Posterior vena cava (tissue), 2 donors: ENCODE measurements at regions of chr4 and their contacts with region 1.

Region 1: DNA sequence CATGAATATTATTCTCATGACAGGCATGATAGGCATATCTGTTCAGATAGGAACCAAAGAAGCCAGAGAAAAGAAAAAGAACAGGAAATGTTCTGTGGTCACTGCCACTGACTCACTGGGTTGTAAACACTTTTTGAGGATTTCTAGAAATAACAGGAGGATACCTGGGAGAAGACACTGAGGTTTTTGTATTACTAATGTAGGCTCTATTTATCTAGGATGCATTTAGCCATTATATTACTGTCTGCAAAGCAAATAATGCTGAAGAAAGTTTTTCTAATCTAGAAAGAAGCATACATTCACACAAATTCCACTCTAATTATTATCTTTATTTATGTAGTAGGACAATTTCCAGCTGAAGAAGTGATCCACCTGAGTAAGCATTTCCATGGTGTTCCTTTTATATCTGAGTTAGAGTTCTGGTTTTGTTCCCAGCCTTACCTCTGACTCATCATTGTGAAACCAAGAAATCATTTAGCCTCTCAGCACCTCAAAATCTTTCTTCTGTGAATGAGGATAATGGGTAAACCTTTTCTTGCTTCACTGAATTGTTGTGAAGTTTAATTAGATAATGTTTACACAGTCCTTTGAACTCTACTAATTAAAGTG is 40.2 kb upstream of the EPGN start:
- DNase-seq: no peak

Region 2: DNA sequence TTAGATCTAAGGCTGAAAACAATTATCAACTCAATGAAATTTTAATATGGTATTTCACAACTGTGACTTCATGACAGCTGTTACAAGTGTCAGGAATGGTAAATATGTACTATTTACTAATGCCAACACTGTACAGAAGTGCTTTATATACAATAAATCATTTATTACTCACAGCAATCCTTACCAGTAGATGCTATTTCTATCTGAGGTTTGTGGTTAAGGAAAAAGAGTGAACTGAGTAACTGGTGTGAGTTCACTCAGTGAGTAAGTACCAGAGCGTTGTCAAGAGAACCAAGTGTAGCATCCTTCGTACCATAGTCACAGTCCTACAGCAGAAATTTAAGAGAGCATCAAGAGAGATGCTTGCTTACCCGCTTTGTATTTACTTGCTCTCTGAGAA is 86.9 kb before region 1 on chr4:
- intact Hi-C with region 1: no loop called
- DNase-seq: no peak

Region 3: DNA sequence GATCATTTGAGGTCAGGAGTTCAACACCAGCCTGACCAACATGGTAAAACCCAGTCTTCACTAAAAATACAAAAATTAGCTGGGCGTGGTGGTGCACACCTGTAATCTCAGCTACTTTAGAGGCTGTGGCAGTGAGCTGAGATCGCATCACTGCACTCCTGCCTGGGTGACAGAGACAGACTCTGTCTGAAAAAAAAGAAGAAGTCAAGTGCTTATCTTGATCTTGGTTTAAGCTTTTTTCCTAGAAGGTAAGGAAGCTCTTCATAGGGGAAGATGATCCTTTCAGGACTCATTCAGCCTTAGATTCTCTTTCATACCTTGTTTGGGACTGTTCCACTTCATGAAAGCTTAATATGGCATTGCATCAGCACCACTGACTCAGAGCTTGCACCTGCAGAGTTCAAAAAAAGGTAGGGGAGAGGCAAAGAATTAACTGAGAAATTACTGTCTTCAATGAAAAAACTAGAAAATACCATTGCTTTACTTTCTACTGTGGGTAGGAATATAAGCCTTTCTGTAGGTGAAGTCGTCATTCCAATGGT is 30.6 kb before region 1 on chr4:
- intact Hi-C with region 1: loop called in 1 of 2 experiments (anchors 2 kb)
- DNase-seq: no peak